Common myeloid progenitor, CD34-positive (primary cell): ENCODE measurements at regions of chr20 and their contacts with region 1.

Region 1: GRCh38 chr20:47711046-47711752 is 74.1 kb downstream of the SULF2 start:
- DNase-seq: peak in 2 of 3 donors; percentile 24 to 29
- H3K4me3 ChIP-seq: peak overlapping the region in 1 of 7 experiments; percentile 14
- H3K27ac ChIP-seq: no peak overlapping the region
- H3K4me1 ChIP-seq: peaks cover 0 to 29% (median 15%) of the 10 kb centered on the region in 4 experiments
- H3K27me3 ChIP-seq: no peaks in the 10 kb centered on the region

Region 2: DNA sequence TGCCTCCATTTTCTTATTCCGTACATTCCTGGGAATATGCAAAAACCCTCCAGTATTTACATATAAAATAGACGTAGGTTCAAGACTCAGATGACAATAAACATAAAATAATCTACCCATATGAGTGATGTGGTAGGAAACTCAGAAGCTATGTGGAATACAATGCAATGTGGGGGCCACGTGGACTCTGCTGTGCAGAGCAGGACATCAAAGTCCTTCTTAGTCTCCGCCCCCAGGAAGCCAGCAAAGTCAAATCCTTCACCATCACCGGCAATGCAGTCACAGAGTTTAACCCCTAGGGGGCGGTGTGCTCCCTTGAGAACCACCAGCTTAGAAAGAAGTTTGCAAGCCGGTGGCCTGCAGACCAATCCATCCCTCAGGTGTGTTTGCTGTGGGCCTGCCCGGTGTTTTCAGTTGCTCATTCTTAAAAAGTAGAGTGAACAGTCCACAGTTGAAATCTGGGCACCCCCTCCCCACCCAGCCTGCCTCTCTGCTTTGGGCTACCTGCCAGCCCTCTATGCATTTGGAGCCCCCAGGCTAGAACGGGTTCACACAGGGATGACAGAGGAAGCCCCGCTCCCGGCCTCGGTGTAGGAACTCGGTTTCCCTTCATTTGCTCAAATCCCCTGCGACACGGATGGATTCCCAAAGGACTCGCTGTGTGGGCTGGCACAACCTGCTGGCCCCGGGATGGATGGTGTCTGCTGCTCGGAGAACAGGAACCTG is 14.2 kb after region 1 on chr20:
- CTCF ChIA-PET with region 1: interaction called, 10 read pairs
- POLR2A ChIA-PET with region 1: interaction called, 7 read pairs
- DNase-seq: peak; percentile 85 to 93 (median 90)
- H3K4me3 ChIP-seq: no peak overlapping the region
- H3K27ac ChIP-seq: no peak overlapping the region
- H3K4me1 ChIP-seq: peaks cover 3 to 51% (median 23%) of the 10 kb centered on the region in 4 experiments
- H3K27me3 ChIP-seq: no peaks in the 10 kb centered on the region